Colonic mucosa (tissue), 4 donors: ENCODE measurements at regions of chr1 and their contacts with region 1.

Region 1: GRCh38 chr1:154479764-154480421 is 22.1 kb upstream of the TDRD10 start:
- DNase-seq: peak; percentile 83
- H3K4me3 ChIP-seq: no peak overlapping the region
- H3K27ac ChIP-seq: no peak overlapping the region
- H3K4me1 ChIP-seq: no peaks in the 10 kb centered on the region
- H3K27me3 ChIP-seq: no peaks in the 10 kb centered on the region
- CTCF ChIP-seq: peak; percentile 90

Region 2: GRCh38 chr1:154404984-154405761 is 74.7 kb before region 1 on chr1 and contains the start of gene IL6R:
- intact Hi-C with region 1: loop called (anchors 5 kb)
- DNase-seq: peak; percentile 92
- H3K4me3 ChIP-seq: peak within 1 kb of the TSS; percentile 56
- H3K27ac ChIP-seq: peak within 1 kb of the TSS; percentile 92
- H3K4me1 ChIP-seq: peaks cover 11% of the 10 kb centered on the region
- H3K27me3 ChIP-seq: no peaks in the 10 kb centered on the region
- CTCF ChIP-seq: peak; percentile 62
- total RNA-seq, gene IL6R: 31.7 to 38.2 TPM

Region 3: DNA sequence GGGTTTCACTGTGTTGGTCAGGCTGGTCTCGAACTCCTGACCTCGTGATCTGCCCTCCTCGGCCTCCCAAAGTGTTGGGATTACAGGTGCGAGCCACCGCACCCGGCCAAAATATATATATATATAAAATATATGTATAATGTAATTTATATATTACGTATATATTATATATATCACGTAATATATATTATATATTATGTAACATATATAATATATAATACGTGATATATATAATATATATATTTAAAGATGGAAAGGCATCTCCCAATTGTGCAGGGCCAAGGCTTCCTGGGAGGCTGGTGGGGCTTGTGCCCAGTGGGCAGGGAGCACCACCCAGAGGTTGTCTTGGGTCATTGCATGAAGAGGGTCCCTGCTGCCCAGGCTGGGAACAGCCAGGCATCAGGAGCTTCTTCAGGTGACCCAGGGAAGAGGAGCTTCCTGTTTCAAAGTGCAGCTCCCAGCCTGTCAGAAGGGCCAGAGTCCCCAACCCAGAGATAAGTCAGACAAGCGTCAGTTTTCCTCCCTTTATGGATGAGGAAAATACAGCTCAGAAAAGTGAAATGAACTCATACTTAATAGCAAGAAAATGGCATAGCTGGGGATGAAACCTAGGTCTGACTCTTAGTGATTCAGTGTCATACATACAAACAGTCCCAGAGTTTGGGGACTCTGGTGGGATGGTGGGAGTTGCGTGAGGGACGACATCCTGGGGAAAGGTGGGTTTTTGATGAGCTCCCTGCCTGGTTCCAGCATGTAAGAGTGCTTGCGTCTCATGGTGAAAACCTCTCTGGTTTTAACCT is 66.6 kb after region 1 on chr1:
- intact Hi-C with region 1: loop called (anchors 2 kb)
- DNase-seq: peak; percentile 47
- H3K4me3 ChIP-seq: no peak overlapping the region
- H3K27ac ChIP-seq: no peak overlapping the region
- H3K4me1 ChIP-seq: no peaks in the 10 kb centered on the region
- H3K27me3 ChIP-seq: no peaks in the 10 kb centered on the region
- CTCF ChIP-seq: peak; percentile 60

Region 4: DNA sequence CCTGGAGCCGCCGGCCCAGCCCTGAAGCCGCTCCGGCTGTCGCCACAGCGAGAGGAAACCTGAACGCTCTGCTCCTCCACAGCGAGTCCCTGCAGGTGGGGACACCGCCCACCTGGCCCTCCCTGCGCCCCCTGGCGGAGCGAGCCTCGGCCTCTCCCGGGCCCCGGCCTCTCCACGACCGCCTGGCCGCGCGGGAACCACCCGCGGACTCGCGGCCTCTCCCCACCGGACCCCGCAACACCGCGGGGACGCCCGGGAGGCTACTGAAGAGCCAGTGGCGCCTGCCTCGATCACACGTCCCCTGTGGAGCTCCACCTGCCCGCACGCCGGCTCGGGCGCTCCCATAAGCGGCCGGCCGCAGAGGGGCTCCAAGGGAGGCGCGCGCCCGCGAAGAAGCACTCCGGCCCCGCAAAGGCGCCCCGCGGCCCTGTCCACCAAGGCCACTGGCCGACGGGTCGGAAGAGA is 280.6 kb after region 1 on chr1:
- intact Hi-C with region 1: loop called (anchors 5 kb)
- DNase-seq: peak; percentile 79
- H3K4me3 ChIP-seq: peak overlapping the region; percentile 40
- H3K27ac ChIP-seq: no peak overlapping the region
- H3K4me1 ChIP-seq: no peaks in the 10 kb centered on the region
- H3K27me3 ChIP-seq: peaks cover 20% of the 10 kb centered on the region
- CTCF ChIP-seq: peak; percentile 71